GM13977 (cell line): ENCODE measurements at regions of chr6 and their contacts with region 1.

Region 1: GRCh38 chr6:37705239-37706051 is 7.8 kb upstream of the MDGA1 start:
- DNase-seq: peak; percentile 90
- CTCF ChIP-seq: peak; percentile 86

Region 2: GRCh38 chr6:37456816-37457560 is 248.5 kb before region 1 on chr6:
- in situ Hi-C with region 1: no loop called
- DNase-seq: no peak
- CTCF ChIP-seq: no peak

Region 3: DNA sequence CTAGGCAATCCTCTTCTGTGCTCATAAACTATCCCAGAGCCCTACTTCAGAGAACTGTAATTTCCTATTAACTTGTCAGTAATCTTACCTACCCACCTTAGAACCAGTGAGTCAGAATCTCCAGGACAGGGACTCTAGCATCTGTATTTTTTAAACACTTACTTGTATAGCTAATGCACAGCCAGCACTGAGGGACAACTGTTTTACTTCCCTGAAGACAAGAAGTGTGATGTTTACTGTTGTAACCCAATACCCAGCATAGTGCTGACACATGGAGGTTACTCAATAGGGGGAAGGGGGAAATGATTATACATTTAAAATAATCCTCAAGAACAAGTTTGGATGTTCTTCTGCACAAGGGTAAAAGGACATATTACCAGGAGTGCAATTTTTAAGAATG is 803.4 kb after region 1 on chr6:
- in situ Hi-C with region 1: loop called (anchors 25 kb)
- DNase-seq: no peak
- CTCF ChIP-seq: no peak